ENCODE measurements at regions of chr12 and their contacts with region 1.

Region 1: DNA sequence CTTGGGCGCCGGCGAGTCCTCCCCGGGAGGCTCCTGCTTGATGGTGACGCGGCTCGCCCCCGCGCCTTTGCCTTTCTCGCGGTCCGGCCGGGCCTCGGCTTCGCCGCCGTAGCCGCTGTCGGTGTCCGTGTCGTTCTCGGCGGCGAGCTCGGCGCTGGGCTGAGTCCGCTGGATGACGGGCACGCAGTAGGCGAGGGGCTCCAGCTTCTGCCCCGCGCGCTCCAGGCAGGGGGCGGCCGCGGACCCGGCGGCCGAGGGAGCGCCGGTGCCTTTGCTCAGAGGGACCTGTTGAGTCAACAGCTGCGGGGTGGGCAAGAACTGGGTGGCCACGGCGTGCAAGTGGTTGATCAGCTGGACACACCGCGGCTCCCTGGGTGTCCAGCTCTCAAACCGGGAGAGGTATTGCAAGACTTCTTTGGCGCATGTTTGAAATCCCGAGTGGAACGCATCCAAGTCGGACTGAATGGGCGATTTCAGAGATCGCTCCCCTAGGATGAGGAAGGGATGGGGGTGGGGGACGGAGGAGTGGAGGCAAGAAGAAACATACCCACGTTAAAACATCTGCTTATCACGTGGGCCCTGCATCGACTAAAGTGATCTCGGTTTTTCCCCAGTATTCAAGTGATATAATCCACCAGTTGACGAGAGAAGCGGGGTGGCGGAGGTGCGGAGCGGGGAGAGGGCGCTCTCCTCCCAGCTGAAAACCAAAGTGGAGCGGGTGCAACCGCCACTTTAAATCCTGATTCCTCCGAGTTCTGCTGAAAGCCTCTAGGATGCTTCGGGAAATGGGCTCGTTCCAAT is 2.0 kb downstream of the BHLHE41 start:
- DNase-seq: no peak
- H3K4me3 ChIP-seq: peak overlapping the region; percentile 60
- H3K27ac ChIP-seq: no peak overlapping the region
- H3K27me3 ChIP-seq: no peaks in the 10 kb centered on the region
- CTCF ChIP-seq: peak; percentile 31

Region 2: GRCh38 chr12:25436203-25437030 is 686.5 kb before region 1 on chr12:
- CTCF ChIA-PET with region 1: interaction called, 11 read pairs
- POLR2A ChIA-PET with region 1: no interaction called
- DNase-seq: peak; percentile 67
- H3K4me3 ChIP-seq: peak overlapping the region; percentile 32
- H3K27ac ChIP-seq: no peak overlapping the region
- H3K27me3 ChIP-seq: no peaks in the 10 kb centered on the region
- CTCF ChIP-seq: peak; percentile 88

Region 3: GRCh38 chr12:26523708-26524150 is 400.8 kb after region 1 on chr12:
- CTCF ChIA-PET with region 1: interaction called, 18 read pairs
- POLR2A ChIA-PET with region 1: no interaction called
- DNase-seq: peak; percentile 75
- H3K4me3 ChIP-seq: no peak overlapping the region
- H3K27ac ChIP-seq: no peak overlapping the region
- H3K27me3 ChIP-seq: no peaks in the 10 kb centered on the region
- CTCF ChIP-seq: no peak

Region 4: GRCh38 chr12:26614020-26614616 is 491.2 kb after region 1 on chr12:
- CTCF ChIA-PET with region 1: interaction called, 80 read pairs
- POLR2A ChIA-PET with region 1: no interaction called
- DNase-seq: no peak
- H3K4me3 ChIP-seq: no peak overlapping the region
- H3K27ac ChIP-seq: no peak overlapping the region
- H3K27me3 ChIP-seq: no peaks in the 10 kb centered on the region
- CTCF ChIP-seq: peak; percentile 63

Region 5: DNA sequence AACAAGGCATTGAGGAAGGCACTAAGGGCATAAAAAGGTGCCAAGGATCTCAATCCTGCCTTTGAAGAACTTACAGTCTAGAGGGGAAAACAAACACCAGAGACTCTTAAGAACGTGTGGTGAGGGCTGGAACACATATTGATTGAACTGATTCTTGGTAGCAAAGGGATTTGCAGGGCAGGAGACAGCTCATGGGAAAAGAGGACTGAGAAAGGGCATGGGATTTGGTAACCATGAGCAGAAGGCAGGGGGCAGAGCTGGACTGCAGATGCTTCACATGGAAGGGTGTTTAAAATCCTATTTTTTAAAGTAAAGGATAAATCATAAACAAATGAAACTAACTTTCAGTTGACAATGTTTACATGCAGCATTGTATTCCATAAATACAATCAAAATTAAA is 507.0 kb after region 1 on chr12:
- CTCF ChIA-PET with region 1: interaction called, 14 read pairs
- POLR2A ChIA-PET with region 1: no interaction called
- DNase-seq: no peak
- H3K4me3 ChIP-seq: peak overlapping the region; percentile 7; the same call in 1 of the 2 replicates
- H3K27ac ChIP-seq: no peak overlapping the region
- H3K27me3 ChIP-seq: no peaks in the 10 kb centered on the region
- CTCF ChIP-seq: peak; percentile 69

Region 6: DNA sequence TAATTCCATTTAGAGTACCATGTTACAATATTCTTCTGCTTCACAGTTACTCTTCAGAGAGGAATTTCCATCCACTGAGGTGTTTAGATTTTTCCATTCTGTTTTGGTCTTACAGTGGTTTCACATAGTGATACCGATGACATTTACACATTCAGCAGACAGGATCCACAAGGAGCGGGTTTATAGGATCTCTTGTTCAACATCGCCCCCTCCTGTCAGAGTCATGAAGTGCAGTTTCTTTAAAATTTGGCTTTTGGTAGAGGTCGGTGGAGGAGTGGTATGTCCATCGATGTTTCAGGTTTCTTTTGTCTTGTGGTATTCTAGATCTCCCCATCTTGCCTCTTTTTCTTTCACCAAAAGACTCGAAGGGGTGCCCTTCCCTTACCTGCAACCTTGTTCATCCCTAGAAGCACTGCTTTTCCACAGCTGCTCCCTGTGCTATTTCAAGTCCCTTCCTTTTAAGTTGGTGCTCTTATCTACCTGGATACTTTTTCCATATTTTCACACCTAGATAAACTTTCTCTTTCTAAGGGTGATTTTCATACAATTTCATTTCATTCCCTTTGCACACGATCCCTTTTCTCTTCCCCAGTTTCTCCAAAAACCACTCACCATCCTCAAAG is 528.8 kb after region 1 on chr12:
- CTCF ChIA-PET with region 1: interaction called, 44 read pairs
- POLR2A ChIA-PET with region 1: no interaction called
- DNase-seq: peak; percentile 60
- H3K4me3 ChIP-seq: no peak overlapping the region
- H3K27ac ChIP-seq: no peak overlapping the region
- H3K27me3 ChIP-seq: no peaks in the 10 kb centered on the region
- CTCF ChIP-seq: peak; percentile 85

Region 7: DNA sequence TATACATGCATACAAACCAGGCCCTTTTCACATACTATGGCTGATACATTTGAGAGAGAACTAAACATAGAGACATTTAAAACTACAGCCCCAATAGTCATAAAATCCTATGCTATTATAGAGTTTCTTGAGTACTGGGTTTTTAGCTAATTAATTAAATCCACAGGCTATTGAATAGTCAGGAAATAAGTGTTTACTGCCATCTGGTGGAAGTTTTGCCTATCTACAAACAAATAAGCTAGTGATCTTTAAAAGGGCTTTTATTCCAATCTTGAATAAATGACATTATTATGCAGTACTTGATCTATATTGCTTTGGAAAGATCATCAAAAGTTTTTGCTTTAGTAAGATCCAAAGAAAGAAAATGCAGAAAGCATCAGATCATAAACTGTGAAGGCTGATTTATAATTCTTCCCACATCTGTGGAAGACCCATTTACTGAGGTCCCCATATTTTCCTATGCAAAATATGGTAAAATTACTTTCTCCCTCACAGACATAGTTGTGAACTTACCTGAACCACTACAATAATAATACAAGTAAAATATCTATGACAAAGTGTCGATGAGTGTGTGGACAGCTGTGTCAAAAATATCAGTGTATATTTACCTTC is 578.8 kb after region 1 on chr12:
- CTCF ChIA-PET with region 1: interaction called, 50 read pairs
- POLR2A ChIA-PET with region 1: no interaction called
- DNase-seq: no peak
- H3K4me3 ChIP-seq: no peak overlapping the region
- H3K27ac ChIP-seq: no peak overlapping the region
- H3K27me3 ChIP-seq: no peaks in the 10 kb centered on the region
- CTCF ChIP-seq: peak; percentile 64